ENCODE measurements at regions of chr2 and their contacts with region 1.

Region 1: DNA sequence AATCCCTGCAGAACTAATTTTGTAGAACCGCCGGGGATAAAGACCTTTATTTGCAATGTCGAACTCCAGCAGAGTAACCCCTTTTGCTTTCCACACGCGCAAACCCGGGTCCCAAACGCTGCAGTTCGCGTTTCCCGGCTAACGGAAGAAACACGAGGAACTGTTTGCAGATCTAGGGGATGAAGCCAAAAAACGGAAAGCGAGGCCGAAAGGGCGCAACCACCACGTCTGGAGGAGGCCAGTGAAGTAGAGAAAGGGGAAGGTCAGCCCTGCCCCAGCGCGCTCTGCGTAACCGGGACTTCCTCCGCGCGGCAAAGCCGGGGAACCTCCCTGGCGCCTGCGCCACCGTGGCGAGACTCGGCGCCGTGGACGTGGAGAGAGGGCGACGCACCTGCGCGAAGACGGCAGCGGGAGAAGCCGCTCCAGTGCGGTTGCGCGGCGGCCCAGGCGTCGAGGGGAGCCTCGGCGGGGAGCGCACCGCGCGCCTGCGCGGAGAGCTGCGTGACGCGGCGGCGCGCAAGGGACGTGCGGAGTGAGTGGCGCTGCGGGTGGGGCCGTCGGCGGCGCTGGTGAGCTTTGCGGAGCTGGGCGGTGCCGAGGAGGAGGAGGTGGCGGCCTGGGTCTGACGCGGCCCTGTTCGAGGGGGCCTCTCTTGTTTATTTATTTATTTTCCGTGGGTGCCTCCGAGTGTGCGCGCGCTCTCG is at the start of gene PPP1CB:
- DNase-seq: peak; percentile 87 to 99 (median 94)

Region 2: GRCh38 chr2:28566521-28567041 is 184.8 kb before region 1 on chr2:
- intact Hi-C with region 1: loop called (anchors 2 kb)
- DNase-seq: peak; percentile 71 to 97 (median 86)

Region 3: GRCh38 chr2:28594289-28595108 is 156.9 kb before region 1 on chr2:
- intact Hi-C with region 1: loop called (anchors 2 kb)
- DNase-seq: peak; percentile 66 to 96 (median 84)

Region 4: DNA sequence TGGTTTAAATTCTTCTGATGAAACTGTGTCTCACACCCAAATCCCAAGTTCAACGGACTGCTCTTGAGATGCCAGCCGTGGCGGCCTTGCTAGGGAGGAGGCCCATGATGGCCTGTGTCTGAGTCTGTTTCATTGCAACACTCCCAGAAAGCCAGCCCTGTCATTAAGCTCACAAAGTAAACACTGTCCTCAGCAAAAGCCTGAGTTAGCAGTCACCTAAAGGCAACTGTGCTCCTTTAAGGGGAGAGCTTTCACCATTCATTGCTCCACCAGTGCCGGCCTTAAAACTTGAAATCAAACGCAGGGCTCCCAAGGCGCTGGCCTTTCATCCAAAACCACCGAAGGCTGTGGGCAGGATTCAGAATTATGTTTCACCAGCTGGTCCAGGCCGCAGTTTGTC is 42.3 kb before region 1 on chr2:
- intact Hi-C with region 1: loop called (anchors 5 kb)
- DNase-seq: no peak

Region 5: GRCh38 chr2:28810384-28811285 is 59.2 kb after region 1 on chr2 and contains the start of gene SPDYA:
- intact Hi-C with region 1: no loop called
- DNase-seq: peak; percentile 20 to 96 (median 68)

Region 6: DNA sequence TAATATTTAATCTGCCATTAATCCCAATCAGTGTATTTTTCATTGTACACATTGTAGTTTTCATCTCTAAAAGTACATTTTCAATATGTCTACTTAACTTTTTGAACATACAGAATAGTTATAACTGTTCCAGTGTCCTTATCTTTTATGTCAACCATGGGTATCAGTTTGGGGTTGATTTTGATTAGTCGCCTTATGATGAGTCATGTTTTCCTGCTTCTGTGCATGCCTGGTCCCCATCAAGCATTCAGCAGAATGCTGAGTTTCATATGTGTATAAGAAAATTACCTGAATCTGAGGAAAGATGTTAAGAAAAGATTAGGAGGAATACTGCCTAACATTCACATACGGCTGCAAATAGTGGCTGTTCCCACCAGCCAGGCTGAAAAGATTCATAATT is 77.0 kb after region 1 on chr2:
- intact Hi-C with region 1: no loop called
- DNase-seq: no peak

Region 7: DNA sequence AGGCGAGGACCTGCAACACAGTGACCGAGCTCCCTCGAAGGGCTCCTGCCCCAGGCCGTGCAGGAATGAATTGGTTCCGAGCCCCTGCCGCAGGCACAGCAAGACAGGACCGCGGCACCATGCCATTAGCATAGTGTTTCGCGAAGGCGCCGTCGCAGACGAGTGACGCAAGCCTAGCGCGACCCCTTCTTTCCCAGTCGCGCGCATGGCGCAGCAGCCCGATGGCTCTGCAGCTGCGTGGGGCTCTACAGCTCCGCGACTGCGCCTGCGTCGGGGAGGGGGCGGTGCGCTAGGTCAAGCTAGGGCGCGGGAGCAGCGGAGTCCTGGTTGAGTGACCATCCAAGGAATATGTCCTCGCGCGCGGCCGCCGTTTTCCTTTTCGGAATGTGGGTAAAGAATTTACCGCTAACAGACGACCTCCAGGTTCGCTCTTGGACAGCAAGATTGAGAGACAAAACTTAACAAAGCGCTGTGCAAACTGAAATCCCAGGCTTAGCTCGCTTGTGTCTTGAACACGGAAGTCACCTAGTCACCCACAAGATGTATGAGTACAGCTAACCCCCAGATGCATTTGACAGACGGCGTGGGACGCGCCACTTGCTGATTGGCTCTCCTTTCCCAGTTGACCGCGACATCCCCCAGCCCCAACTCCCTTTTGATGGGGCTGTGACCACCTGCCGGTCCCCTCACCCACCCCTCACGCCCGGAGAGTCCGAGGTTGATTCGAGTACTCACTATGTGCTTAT is 118.9 kb after region 1 on chr2 and contains the start of gene TRMT61B:
- intact Hi-C with region 1: loop called (anchors 2 kb)
- DNase-seq: peak; percentile 93 to 99 (median 96)

Region 8: DNA sequence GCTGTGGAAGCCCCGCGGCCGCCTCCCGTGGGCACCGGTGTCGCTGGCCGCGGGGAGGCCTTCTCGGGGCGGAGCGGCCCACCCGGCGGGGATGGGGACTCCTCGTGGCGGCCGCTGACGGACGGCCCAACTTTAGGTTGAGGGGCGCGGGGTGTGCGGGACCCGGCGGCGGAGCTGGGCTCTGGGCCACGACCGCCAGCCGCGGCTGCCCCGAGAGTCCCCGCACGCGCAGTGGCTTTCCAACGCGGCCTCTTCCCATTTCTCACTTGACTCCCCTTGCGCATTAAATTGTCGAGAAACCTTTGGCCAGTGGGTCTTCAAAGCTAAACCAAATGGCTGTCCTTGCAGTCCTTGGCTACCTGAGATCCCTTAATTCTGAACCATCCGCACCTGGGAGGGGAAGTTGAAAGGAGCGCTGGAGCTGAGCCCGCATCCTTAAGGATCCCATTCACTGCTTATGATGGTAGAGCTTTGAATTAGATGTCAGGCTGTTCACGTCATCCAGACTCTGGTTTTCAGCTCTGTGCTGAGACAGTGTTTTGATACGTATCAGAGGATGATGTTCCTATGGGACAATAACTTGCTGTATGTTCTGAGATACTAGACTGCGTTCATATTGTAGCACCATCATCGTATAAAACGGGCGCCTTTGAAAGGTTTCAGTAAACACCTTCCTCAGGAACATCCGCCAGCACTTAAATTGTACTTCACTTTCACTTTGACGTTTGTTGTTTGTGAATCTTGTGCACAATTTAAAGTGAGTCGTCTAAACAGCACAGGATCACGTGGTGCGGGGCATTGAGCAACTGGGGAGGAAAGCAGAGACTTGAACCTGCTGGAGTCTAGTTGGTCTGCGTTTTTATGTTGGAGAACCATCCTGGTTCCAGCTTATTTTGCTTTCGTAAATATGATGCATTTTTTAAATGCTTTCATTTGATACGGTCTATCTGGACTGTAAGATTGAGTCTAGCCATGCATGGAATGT is 364.7 kb after region 1 on chr2:
- intact Hi-C with region 1: loop called (anchors 5 kb)
- DNase-seq: peak; percentile 43 to 92 (median 64)

Measured in posterior cingulate gyrus (tissue), 11 donors.